Psoas muscle (tissue), 8 donors: ENCODE measurements at regions of chr5 and their contacts with region 1.

Region 1: GRCh38 chr5:43729846-43730478 is 127.0 kb downstream of the NNT start:
- DNase-seq: no peak
- ATAC-seq: no peak
- H3K4me3 ChIP-seq: no peak overlapping the region
- H3K27ac ChIP-seq: no peak overlapping the region
- H3K4me1 ChIP-seq: no peaks in the 10 kb centered on the region
- H3K27me3 ChIP-seq: no peaks in the 10 kb centered on the region
- CTCF ChIP-seq: peak; percentile 55

Region 2: DNA sequence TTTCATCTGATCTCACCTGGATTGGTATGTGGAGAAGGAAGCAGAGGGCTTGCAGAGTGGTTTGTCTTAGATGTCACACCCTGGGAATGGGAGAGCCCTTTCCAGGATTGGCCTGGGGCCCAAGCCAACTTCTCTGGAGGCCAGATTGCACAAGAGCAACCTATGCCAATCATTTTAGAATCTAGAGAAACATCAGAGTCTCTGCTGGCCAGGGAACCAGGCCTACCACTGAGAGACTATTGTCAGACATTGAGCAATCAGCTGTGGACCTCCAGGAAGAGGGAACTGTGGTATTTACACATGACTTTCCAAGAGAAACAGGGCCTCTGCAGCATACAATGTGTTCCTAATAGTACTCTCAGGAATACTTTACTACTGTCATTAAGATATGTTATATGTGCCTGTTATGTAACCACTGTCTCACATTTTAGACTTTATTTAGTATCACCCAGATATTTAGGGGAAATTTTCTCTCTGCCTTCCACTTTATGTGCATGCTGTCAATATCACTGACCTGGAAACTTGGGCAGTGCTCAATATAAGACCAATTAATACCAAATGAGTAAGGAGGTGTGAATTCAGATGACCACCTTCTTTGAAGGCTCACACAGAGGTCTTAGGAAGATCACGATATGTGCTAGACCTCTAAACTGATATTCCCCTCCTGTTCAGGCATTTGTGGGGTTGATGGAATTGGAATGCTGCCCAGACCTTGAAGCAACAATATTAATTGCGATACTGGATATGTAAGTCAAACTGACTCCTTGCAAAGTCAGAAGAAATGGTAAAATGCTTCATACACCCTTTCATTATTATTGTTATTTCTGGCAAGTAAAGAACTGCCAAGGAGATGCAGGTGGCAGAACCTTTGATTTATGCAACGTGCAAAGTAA is 297.2 kb before region 1 on chr5:
- intact Hi-C with region 1: no loop called
- DNase-seq: peak; percentile 42 to 75
- ATAC-seq: peak; percentile 51 to 66 (median 59)
- H3K4me3 ChIP-seq: no peak overlapping the region
- H3K27ac ChIP-seq: no peak overlapping the region
- H3K4me1 ChIP-seq: peaks cover 10% of the 10 kb centered on the region
- H3K27me3 ChIP-seq: no peaks in the 10 kb centered on the region
- CTCF ChIP-seq: no peak

Region 3: GRCh38 chr5:44332285-44332971 is 602.5 kb after region 1 on chr5:
- intact Hi-C with region 1: loop called (anchors 5 to 10 kb)
- DNase-seq: no peak
- ATAC-seq: peak in 1 of 4 donors; percentile 50
- H3K4me3 ChIP-seq: no peak overlapping the region
- H3K27ac ChIP-seq: no peak overlapping the region
- H3K4me1 ChIP-seq: no peaks in the 10 kb centered on the region
- H3K27me3 ChIP-seq: no peaks in the 10 kb centered on the region
- CTCF ChIP-seq: peak; percentile 52